OCI-LY7 (cell line): ENCODE measurements at regions of chr5 and their contacts with region 1.

Region 1: DNA sequence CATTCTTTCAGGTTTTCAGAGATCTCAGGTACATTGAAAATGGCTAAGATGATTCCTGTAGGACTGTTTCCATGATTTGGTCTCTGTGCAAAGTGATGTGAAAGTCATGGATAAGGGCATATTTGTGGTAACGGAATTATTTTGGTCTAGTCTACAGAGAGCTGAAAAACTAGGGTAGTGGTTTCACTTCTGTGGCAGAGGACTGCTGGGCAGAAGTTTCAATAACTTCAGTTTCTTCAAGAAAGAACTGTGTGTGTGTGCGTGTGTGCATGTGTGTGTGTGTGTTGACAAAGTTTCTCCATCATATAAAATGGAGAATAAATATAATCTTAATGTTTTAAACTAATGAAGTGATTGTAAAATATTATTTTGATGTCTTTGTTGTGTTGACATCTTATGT is 4.3 kb downstream of the CNOT8 start:
- DNase-seq: no peak
- H3K4me3 ChIP-seq: no peak overlapping the region
- H3K27ac ChIP-seq: no peak overlapping the region
- H3K4me1 ChIP-seq: peaks cover 27% of the 10 kb centered on the region
- CTCF ChIP-seq: no peak

Region 2: GRCh38 chr5:154878642-154879335 is 16.0 kb after region 1 on chr5:
- CTCF ChIA-PET with region 1: no interaction called
- POLR2A ChIA-PET with region 1: interaction called, 11 read pairs
- intact Hi-C with region 1: no loop called
- DNase-seq: peak; percentile 20
- H3K4me3 ChIP-seq: no peak overlapping the region
- H3K27ac ChIP-seq: no peak overlapping the region
- H3K4me1 ChIP-seq: no peaks in the 10 kb centered on the region
- CTCF ChIP-seq: no peak